ENCODE measurements at regions of chr16 and their contacts with region 1.

Region 1: DNA sequence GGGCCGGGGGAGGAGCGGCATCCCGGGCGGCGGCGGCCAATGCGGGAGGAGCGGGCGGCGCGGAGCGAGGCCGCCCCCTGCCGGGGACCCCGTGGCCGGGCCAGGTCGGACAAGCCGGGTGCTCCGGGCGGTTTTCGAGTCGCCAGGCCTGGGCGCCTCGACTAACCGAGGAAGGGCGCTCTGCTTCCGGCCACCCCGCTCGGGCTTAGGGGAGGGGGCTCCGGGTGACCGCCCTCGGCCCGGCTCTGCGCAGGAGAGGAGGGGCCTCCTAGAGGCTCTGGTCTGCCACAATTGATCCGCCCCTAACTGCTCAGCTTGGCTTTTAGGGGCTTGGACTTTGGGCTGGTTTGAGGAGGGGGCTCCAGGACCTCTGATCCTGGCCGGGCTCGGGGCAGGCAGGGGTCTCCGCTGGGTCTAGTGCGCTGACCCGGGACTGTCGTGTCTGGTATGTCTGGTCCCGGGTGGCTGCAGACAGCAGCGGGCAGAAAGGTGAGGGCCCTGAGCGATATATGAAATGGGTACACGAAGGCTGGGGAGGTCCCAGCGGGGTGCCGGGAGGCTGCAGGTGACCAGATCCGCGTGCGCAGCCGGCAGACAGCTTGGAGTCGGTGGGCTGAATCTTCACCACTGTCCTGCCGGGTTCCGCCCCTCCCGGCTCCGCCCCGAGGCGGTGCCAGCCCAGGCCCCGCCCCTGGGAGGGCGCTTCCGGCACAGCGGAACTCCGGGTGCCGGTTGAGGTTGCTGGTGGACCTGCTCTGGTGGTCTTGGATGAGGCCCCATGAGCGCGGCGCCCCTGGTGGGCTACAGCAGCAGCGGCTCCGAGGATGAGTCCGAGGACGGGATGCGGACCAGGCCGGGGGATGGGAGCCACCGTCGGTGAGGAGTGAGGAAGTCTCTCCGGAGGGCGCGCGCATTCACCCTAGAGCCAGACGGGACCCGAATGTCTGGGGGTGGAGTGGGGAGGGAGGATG is at the start of gene USB1:
- DNase-seq: peak; percentile 96
- H3K4me3 ChIP-seq: peak within 1 kb of the TSS; percentile 69 to 95 (median 82)
- H3K27ac ChIP-seq: peak within 1 kb of the TSS; percentile 87 to 96 (median 93)
- H3K4me1 ChIP-seq: peaks cover 31 to 47% (median 40%) of the 10 kb centered on the region in 4 donors
- H3K27me3 ChIP-seq: no peaks in the 10 kb centered on the region
- CTCF ChIP-seq: peak; percentile 72 to 78 (median 76)
- EP300 ChIP-seq: no peak
- POLR2A ChIP-seq: peak; percentile 47
- total RNA-seq, gene USB1: 31.5 to 51.1 (median 33.3) TPM

Region 2: GRCh38 chr16:57757326-57757786 is 243.6 kb before region 1 on chr16:
- intact Hi-C with region 1: loop called (anchors 5 kb)
- DNase-seq: peak; percentile 96
- H3K4me3 ChIP-seq: no peak overlapping the region
- H3K27ac ChIP-seq: peak overlapping the region in 2 of 4 donors; percentile 27 to 55
- H3K4me1 ChIP-seq: peaks cover 0 to 15% (median 11%) of the 10 kb centered on the region in 4 donors
- H3K27me3 ChIP-seq: no peaks in the 10 kb centered on the region
- CTCF ChIP-seq: peak; percentile 90 to 99 (median 96)
- EP300 ChIP-seq: no peak
- POLR2A ChIP-seq: no peak

Region 3: DNA sequence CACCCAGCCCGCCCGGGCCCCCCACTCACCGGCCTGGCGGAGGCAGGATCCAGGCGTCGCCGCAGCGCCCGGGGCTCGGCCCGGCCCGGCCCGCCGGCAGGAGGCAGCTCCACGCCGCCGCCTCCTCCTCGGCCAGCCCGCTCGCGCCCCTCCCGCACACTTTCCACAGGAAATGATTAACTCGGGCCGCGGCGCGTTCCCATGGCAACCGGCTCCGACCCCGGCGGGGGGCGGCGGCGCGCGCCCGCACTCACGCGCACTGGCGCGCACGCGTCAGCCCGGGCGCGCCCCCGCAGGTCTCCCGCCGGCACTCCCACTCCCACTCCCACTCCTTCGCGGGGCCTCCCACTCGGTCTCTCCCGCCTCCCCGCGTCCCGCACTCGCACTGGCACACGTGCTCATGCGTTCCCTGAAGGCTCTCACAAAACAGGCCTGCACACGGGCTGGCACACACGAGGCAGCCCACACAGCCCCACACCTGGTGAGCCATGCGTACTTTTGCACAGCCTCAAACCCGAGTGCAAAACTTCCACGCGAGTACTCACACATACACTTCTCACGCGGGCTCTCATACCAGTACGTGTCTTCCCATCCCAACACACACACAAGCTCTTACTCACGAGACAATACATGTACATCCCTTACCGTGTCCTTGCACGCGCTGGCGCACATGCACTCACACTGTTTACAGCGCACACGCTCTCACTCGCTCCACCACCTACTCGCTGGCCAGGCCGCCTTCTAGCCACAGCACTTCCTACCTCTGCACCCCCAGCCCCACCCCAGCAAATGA is 198.5 kb before region 1 on chr16 and contains the start of gene KIFC3:
- intact Hi-C with region 1: loop called (anchors 5 kb)
- DNase-seq: no peak
- H3K4me3 ChIP-seq: peak within 1 kb of the TSS; percentile 70 to 80 (median 73)
- H3K27ac ChIP-seq: peak within 1 kb of the TSS; percentile 83 to 90 (median 88)
- H3K4me1 ChIP-seq: peaks cover 59 to 72% (median 68%) of the 10 kb centered on the region in 4 donors
- H3K27me3 ChIP-seq: no peaks in the 10 kb centered on the region
- CTCF ChIP-seq: peak in 2 of 3 experiments; percentile 28 to 43
- EP300 ChIP-seq: no peak
- POLR2A ChIP-seq: no peak
- total RNA-seq, gene KIFC3: 28.2 to 76.8 (median 46.6) TPM

Region 4: DNA sequence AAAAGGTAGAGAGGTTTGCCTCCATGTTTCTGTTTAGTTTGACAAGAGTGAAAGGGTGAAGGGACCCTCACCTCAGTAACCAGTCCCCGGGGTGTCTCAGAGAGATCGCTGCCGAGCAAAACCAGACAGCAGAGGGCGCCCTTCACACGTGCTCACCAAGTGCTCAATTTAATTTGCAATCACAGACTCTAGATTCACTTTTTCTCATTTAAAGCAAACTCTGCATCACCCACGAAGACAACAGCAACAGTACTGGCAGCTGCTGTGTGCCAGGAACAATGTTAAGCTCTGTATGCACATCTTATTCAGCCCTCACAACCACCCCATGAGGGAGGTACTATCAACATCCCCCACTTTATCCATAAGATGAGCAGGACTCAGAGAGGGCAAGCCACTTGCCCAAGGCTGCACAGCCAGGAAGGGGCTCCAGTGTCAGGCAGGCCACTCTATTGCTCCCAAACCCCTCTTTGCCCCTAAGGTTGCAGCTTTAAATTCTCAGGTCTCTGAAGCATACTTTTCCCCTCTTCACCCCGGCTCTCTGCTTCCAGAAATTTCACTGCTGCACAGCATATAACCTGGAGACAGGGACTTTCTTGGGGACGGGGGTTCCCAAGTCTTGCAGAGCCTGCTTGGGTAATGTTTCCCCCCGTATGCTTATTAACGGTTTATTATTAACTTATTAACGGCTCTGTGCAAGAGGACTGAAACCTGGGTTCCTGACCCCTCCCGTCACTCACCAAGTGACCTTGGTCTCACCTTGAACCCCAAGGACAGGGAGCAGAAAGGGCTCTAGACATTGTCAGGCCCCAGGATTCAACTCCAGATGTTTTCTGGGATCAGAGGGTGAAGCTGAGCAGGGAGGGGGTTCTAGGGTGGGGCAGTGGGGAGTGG is 101.0 kb before region 1 on chr16:
- intact Hi-C with region 1: loop called (anchors 2 kb)
- DNase-seq: no peak
- H3K4me3 ChIP-seq: no peak overlapping the region
- H3K27ac ChIP-seq: no peak overlapping the region
- H3K4me1 ChIP-seq: no peaks in the 10 kb centered on the region
- H3K27me3 ChIP-seq: peaks cover 0 to 48% (median 2%) of the 10 kb centered on the region in 4 donors
- CTCF ChIP-seq: peak; percentile 79 to 83 (median 82)
- EP300 ChIP-seq: no peak
- POLR2A ChIP-seq: no peak

Region 5: GRCh38 chr16:57938936-57939871 is 61.8 kb before region 1 on chr16:
- intact Hi-C with region 1: no loop called
- DNase-seq: no peak
- H3K4me3 ChIP-seq: no peak overlapping the region
- H3K27ac ChIP-seq: peak overlapping the region in 1 of 4 donors; percentile 19
- H3K4me1 ChIP-seq: peaks cover 15 to 23% (median 19%) of the 10 kb centered on the region in 4 donors
- H3K27me3 ChIP-seq: peaks cover 0 to 9% (median 0%) of the 10 kb centered on the region in 4 donors
- CTCF ChIP-seq: no peak
- EP300 ChIP-seq: no peak
- POLR2A ChIP-seq: no peak

Measured in esophagus muscularis mucosa (tissue), 4 donors.